Heart right ventricle (tissue), 16 donors: ENCODE measurements at regions of chr2 and their contacts with region 1.

Region 1: DNA sequence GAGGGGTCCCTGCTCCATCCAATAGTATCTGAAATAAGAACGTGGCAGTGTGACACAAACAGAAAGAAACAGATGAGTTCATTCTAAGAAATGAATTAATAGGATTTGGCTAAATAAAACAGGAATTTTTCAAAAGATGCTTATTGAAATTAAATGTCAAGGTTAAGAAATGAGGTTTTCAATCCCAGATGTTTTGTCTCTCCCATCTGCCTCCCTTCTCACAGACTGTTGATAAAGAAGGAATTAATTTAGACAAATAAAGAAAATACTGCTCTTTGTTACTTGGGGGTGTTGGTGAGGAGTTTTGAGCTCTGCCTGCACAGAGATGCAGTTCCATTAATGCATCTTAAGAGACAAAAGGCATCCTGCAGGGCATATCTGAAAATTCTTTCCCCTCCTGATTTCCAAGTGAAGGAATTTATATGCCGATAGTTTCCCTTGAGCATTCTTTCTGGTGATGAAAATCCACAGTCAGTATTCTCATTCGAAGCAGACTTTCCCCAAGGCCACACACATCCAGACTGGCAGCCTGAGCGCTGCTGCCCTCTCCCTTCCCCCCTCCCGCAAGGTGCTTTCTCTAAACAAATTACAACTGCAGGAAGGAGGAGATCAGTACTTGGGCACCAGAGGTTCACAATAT is 385.4 kb upstream of the RND3 start:
- DNase-seq: no peak
- ATAC-seq: no peak
- H3K4me3 ChIP-seq: no peak overlapping the region
- H3K27ac ChIP-seq: no peak overlapping the region
- H3K4me1 ChIP-seq: peaks cover 0 to 8% (median 0%) of the 10 kb centered on the region in 9 donors
- H3K27me3 ChIP-seq: no peaks in the 10 kb centered on the region
- CTCF ChIP-seq: no peak

Region 2: GRCh38 chr2:149561309-149561926 is 1311.5 kb before region 1 on chr2:
- intact Hi-C with region 1: loop called in 1 of 10 experiments (anchors 5 kb)
- DNase-seq: no peak
- ATAC-seq: no peak
- H3K4me3 ChIP-seq: no peak overlapping the region
- H3K27ac ChIP-seq: no peak overlapping the region
- H3K4me1 ChIP-seq: peaks cover 0 to 9% (median 0%) of the 10 kb centered on the region in 9 donors
- H3K27me3 ChIP-seq: no peaks in the 10 kb centered on the region
- CTCF ChIP-seq: peak; percentile 79 to 95 (median 89)